Testis (tissue), 5 donors: ENCODE measurements at regions of chr1 and their contacts with region 1.

Region 1: GRCh38 chr1:2314803-2315673 is 76.3 kb downstream of the MORN1 start:
- DNase-seq: no peak
- H3K4me3 ChIP-seq: peak overlapping the region; percentile 60 to 70
- H3K27ac ChIP-seq: peak overlapping the region; percentile 82 to 93
- H3K4me1 ChIP-seq: peaks cover 69% of the 10 kb centered on the region
- H3K27me3 ChIP-seq: no peaks in the 10 kb centered on the region
- CTCF ChIP-seq: peak; percentile 51 to 100 (median 73)
- POLR2A ChIP-seq: no peak

Region 2: DNA sequence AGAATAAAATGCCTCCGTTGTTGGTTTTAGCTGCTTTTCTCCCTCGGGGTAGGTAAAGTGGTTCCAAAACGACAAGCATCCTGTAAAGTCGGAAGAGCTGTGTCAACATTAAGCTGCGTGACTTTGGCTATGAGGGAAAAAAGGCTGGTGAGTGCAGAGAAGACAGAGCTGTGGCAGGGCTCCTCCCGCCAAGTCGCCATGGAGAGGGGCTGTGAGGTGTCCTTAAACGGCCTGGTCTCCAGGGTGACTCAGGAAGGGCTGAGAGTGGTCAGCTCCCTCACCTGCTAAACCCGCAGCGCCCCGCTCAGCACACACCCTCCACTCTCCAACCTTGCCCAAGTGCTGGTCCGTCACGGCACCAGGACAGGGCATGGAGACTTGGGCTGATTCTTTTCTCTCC is 1482.9 kb before region 1 on chr1:
- intact Hi-C with region 1: no loop called
- DNase-seq: no peak
- H3K4me3 ChIP-seq: no peak overlapping the region
- H3K27ac ChIP-seq: no peak overlapping the region
- H3K4me1 ChIP-seq: no peaks in the 10 kb centered on the region
- H3K27me3 ChIP-seq: no peaks in the 10 kb centered on the region
- CTCF ChIP-seq: no peak
- POLR2A ChIP-seq: no peak

Region 3: GRCh38 chr1:2205191-2205952 is 109.7 kb before region 1 on chr1:
- intact Hi-C with region 1: loop called (anchors 10 kb)
- DNase-seq: peak; percentile 97
- H3K4me3 ChIP-seq: peak overlapping the region; percentile 54 to 55
- H3K27ac ChIP-seq: peak overlapping the region; percentile 67 to 94
- H3K4me1 ChIP-seq: peaks cover 43% of the 10 kb centered on the region
- H3K27me3 ChIP-seq: no peaks in the 10 kb centered on the region
- CTCF ChIP-seq: no peak
- POLR2A ChIP-seq: no peak

Region 4: DNA sequence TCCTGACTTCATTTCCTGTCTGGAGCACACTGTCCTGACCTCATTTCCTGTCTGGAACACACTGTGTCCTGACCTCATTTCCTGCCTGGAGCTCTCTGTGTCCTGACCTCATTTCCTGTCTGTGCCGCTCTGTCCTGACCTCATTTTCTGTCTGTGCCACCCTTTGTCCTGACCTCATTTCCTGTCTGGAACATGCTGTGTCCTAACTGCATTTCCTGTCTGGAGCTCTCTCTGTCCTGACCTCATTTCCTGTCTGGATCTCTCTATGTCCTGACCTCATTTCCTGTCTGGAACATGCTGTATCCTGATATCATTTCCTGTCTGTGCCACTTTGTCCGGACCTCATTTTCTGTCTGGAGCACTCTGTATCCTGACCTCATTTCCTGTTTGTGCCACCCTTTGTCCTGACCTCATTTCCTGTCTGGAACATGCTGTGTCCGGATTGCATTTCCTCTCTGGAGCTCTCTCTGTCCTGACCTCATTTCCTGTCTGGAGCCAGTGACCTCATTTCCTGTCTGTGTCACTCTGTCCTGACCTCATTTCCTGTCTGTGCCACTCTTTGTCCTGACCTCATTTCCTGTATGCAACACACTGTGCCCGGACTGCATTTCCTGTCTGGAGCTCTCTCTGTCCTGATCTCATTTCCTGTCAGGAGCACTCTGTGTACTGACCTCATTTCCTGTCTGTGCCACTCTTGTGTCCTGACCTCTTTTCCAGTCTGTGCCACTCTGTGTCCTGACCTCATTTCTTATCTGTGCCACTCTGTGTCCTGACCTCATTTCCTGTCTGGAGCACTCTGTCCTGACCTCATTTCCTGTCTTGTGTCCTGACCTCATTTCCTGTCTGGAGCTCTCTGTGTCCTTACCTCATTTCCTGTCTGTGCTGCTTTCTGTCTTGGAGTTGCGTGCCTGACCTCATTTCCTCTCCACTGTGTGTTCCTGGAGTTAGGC is 59.3 kb before region 1 on chr1:
- intact Hi-C with region 1: no loop called
- DNase-seq: no peak
- H3K4me3 ChIP-seq: no peak overlapping the region
- H3K27ac ChIP-seq: peak overlapping the region in 1 of 2 donors; percentile 62
- H3K4me1 ChIP-seq: peaks cover 18% of the 10 kb centered on the region
- H3K27me3 ChIP-seq: no peaks in the 10 kb centered on the region
- CTCF ChIP-seq: no peak
- POLR2A ChIP-seq: no peak